Spleen (tissue), 13 donors: ENCODE measurements at regions of chr5 and their contacts with region 1.

Region 1: GRCh38 chr5:154754460-154755360 is 467 bp upstream of the LARP1 start:
- DNase-seq: peak; percentile 100
- H3K4me3 ChIP-seq: peak overlapping the region; percentile 85 to 100 (median 96)
- H3K27ac ChIP-seq: peak overlapping the region; percentile 94 to 99 (median 97)
- H3K4me1 ChIP-seq: peaks cover 17 to 46% (median 38%) of the 10 kb centered on the region in 6 donors
- H3K27me3 ChIP-seq: no peaks in the 10 kb centered on the region
- CTCF ChIP-seq: peak in 10 of 11 experiments; percentile 28 to 69 (median 55)
- POLR2A ChIP-seq: peak in 1 of 3 donors; percentile 13

Region 2: GRCh38 chr5:153919161-153919560 is 835.5 kb before region 1 on chr5:
- intact Hi-C with region 1: no loop called
- DNase-seq: no peak
- H3K4me3 ChIP-seq: no peak overlapping the region
- H3K27ac ChIP-seq: no peak overlapping the region
- H3K4me1 ChIP-seq: no peaks in the 10 kb centered on the region
- H3K27me3 ChIP-seq: peaks cover 0 to 5% (median 0%) of the 10 kb centered on the region in 7 donors
- CTCF ChIP-seq: no peak
- POLR2A ChIP-seq: no peak

Region 3: DNA sequence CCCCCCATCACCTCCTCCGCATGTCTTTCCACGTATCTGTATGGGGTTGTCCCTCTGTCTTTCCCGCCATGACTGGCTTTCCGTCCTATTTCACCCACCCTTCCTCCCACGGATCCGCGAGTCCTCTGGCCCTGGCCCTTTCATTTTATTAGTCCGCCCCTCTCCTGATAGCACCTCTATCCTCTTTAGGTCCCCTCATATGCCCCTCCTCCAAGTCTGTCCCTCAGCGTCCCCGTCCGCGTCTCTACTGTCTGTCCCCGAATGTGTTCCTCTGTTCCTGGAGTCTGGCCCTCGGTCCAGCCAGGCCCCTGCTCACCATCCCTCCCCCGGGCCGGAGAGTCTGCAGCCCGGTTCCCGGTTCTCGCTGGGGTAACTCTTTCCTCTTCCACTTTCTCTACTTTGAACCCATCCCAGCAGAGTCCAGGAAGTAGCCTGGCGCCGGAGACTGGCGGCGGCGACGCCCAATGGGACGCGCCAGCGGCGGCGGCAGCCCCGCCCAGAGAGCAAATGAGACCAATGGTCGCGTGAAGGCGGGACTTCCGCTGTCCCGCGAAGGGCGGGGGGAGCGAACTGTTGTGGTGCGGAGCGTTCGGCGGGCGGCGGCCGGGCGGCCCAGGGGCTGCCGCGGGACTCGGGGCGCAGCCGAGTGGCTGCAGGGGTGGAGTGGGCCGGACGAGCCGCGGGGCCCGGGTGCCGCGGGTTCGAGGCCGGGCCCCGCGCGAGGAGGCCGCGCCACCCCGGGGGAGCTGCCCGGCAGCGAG is 309.1 kb before region 1 on chr5 and contains the start of gene SAP30L:
- intact Hi-C with region 1: loop called (anchors 10 kb)
- DNase-seq: peak; percentile 97
- H3K4me3 ChIP-seq: peak within 1 kb of the TSS; percentile 89 to 99 (median 98)
- H3K27ac ChIP-seq: peak within 1 kb of the TSS; percentile 81 to 95 (median 85)
- H3K4me1 ChIP-seq: peaks cover 19 to 64% (median 52%) of the 10 kb centered on the region in 6 donors
- H3K27me3 ChIP-seq: no peaks in the 10 kb centered on the region
- CTCF ChIP-seq: peak in 1 of 11 experiments; percentile 39
- POLR2A ChIP-seq: peak in 2 of 3 donors; percentile 70 to 82
- total RNA-seq, gene SAP30L: 28.8 to 43.5 (median 36.7) TPM

Region 4: DNA sequence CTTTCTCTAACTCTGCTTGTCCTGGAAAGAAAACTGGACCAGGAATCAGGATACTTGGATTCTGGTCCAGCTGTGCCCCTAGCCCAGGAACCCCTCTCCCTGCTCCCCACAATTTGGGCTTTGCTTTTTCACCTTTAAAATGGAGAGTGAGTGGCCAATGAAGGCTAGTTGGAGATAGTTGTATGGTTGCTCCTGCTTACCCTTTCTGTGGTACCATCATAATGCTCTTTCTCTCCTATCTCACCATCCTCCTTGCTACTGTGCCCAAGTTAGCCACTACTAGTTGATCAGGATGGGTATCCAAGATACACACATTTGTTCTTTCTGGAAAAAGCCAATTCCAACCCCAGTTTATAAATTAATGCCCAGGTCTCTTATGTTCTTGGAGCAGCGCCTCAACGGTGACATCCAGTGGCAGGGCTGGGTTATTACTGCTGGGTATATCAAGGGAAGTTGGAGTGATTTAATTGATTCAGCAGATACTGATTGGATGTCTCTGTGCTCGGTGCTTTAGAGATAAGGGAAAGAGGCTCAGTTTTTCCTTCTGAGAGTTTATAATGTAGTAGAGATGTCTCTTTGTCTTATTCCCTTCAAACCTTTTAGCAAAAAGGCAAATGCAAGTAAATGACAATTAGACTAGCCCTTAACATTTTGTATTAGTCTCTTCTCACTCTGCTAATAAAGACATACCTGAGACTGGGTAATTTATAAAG is 57.1 kb after region 1 on chr5:
- intact Hi-C with region 1: loop called (anchors 10 kb)
- DNase-seq: peak; percentile 86
- H3K4me3 ChIP-seq: no peak overlapping the region
- H3K27ac ChIP-seq: peak overlapping the region; percentile 31 to 74 (median 52)
- H3K4me1 ChIP-seq: peaks cover 0 to 44% (median 34%) of the 10 kb centered on the region in 6 donors
- H3K27me3 ChIP-seq: no peaks in the 10 kb centered on the region
- CTCF ChIP-seq: peak; percentile 68 to 89 (median 85)
- POLR2A ChIP-seq: no peak

Region 5: GRCh38 chr5:154860123-154860522 is 105.4 kb after region 1 on chr5:
- intact Hi-C with region 1: loop called (anchors 5 kb)
- DNase-seq: no peak
- H3K4me3 ChIP-seq: peak overlapping the region; percentile 45 to 88 (median 62)
- H3K27ac ChIP-seq: peak overlapping the region; percentile 92 to 100 (median 98)
- H3K4me1 ChIP-seq: peaks cover 27 to 72% (median 55%) of the 10 kb centered on the region in 6 donors
- H3K27me3 ChIP-seq: no peaks in the 10 kb centered on the region
- CTCF ChIP-seq: no peak
- POLR2A ChIP-seq: no peak

Region 6: GRCh38 chr5:154916884-154917283 is 162.2 kb after region 1 on chr5:
- intact Hi-C with region 1: no loop called
- DNase-seq: no peak
- H3K4me3 ChIP-seq: no peak overlapping the region
- H3K27ac ChIP-seq: no peak overlapping the region
- H3K4me1 ChIP-seq: no peaks in the 10 kb centered on the region
- H3K27me3 ChIP-seq: no peaks in the 10 kb centered on the region
- CTCF ChIP-seq: no peak
- POLR2A ChIP-seq: no peak